Natural killer cell (primary cell): ENCODE measurements at regions of chr4 and their contacts with region 1.

Region 1: DNA sequence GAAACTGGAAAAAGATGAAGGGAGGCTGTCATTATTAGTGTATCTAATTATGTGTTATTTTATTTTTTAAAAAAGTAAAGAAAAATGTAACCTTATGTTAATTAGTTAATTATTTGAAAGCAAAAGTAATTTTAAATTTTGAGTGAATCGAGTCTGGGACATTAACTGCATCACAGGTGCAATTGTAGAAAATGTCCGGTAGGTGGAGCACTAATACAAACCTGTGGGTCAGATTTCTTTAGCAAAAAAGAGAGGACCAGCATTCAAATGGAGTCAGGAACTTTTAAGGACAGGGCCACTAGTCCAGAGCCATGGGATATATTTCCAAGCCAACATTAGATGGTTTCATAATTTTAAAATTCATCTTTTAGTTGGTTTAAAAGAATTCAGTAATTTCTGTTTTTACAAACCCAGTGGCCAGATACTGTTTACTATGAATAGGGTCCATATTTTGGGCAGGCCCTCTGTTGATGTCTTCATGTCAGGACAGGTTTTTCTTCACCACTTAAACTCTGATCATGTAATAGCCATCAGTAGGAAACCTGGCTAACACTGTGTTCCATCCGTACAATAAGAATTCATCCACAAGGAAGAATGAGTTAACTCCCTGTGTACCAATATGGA is 27.2 kb downstream of the BST1 start:
- DNase-seq: peak in 1 of 2 donors; percentile 74
- ATAC-seq: peak; percentile 76 to 83 (median 77)
- H3K4me3 ChIP-seq: no peak overlapping the region
- H3K4me3 Mint-ChIP-seq: no peak overlapping the region
- H3K27ac ChIP-seq: no peak overlapping the region
- H3K27ac Mint-ChIP-seq: no peak overlapping the region
- H3K4me1 ChIP-seq: no peaks in the 10 kb centered on the region
- H3K4me1 Mint-ChIP-seq: peaks cover 27 to 28% of the 10 kb centered on the region in 2 donors
- H3K27me3 ChIP-seq: no peaks in the 10 kb centered on the region
- H3K27me3 Mint-ChIP-seq: peaks cover 4 to 8% of the 10 kb centered on the region in 2 donors
- CTCF ChIP-seq: peak; percentile 98

Region 2: DNA sequence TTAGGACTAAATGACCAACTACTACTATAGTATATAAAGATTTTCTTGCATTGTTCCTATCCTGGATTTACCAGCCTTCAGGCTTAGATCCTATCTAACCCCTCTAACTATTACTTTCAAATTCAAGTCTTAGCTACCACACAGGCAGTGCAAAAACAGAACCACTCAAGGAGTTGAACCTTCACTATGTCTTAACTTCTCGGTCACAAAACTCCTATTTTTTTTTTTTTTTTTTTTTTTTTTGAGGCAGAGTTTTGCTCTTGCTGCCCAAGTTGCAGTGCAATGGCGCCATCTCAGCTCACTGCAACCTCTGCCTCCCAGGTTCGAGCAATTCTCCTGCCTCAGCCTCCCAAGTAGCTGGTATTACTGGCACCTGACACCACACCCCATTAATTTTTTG is 54.7 kb before region 1 on chr4:
- intact Hi-C with region 1: no loop called
- DNase-seq: no peak
- ATAC-seq: no peak
- H3K4me3 ChIP-seq: no peak overlapping the region
- H3K4me3 Mint-ChIP-seq: no peak overlapping the region
- H3K27ac ChIP-seq: no peak overlapping the region
- H3K27ac Mint-ChIP-seq: no peak overlapping the region
- H3K4me1 ChIP-seq: no peaks in the 10 kb centered on the region
- H3K4me1 Mint-ChIP-seq: no peaks in the 10 kb centered on the region
- H3K27me3 ChIP-seq: no peaks in the 10 kb centered on the region
- H3K27me3 Mint-ChIP-seq: no peaks in the 10 kb centered on the region
- CTCF ChIP-seq: no peak

Region 3: GRCh38 chr4:15756361-15756861 is 26.4 kb after region 1 on chr4:
- intact Hi-C with region 1: loop called (anchors 1 kb)
- DNase-seq: peak; percentile 68 to 91
- ATAC-seq: peak; percentile 85 to 95 (median 91)
- H3K4me3 ChIP-seq: peak overlapping the region; percentile 11
- H3K4me3 Mint-ChIP-seq: peak overlapping the region; percentile 90
- H3K27ac ChIP-seq: peak overlapping the region; percentile 40
- H3K27ac Mint-ChIP-seq: peak overlapping the region; percentile 79 to 88
- H3K4me1 ChIP-seq: peaks cover 36% of the 10 kb centered on the region
- H3K4me1 Mint-ChIP-seq: peaks cover 48 to 49% of the 10 kb centered on the region in 2 donors
- H3K27me3 ChIP-seq: no peaks in the 10 kb centered on the region
- H3K27me3 Mint-ChIP-seq: peaks cover 0 to 4% of the 10 kb centered on the region in 2 donors
- CTCF ChIP-seq: peak; percentile 65

Region 4: GRCh38 chr4:15778289-15779241 is 48.5 kb after region 1 on chr4 and contains the start of gene CD38:
- intact Hi-C with region 1: loop called (anchors 1 kb)
- DNase-seq: peak; percentile 61 to 68
- ATAC-seq: peak; percentile 55 to 71 (median 70)
- H3K4me3 ChIP-seq: peak within 1 kb of the TSS; percentile 59
- H3K4me3 Mint-ChIP-seq: peak within 1 kb of the TSS; percentile 91
- H3K27ac ChIP-seq: peak within 1 kb of the TSS; percentile 49
- H3K27ac Mint-ChIP-seq: peak within 1 kb of the TSS; percentile 83 to 86
- H3K4me1 ChIP-seq: peaks cover 46% of the 10 kb centered on the region
- H3K4me1 Mint-ChIP-seq: peaks cover 71 to 78% of the 10 kb centered on the region in 2 donors
- H3K27me3 ChIP-seq: no peaks in the 10 kb centered on the region
- H3K27me3 Mint-ChIP-seq: no peaks in the 10 kb centered on the region
- CTCF ChIP-seq: no peak
- total RNA-seq, gene CD38: 91.8 to 124 (median 98.8) TPM

Region 5: GRCh38 chr4:15805583-15806517 is 75.8 kb after region 1 on chr4:
- intact Hi-C with region 1: loop called (anchors 5 kb)
- DNase-seq: peak in 1 of 2 donors; percentile 78
- ATAC-seq: peak; percentile 74 to 83 (median 77)
- H3K4me3 ChIP-seq: no peak overlapping the region
- H3K4me3 Mint-ChIP-seq: no peak overlapping the region
- H3K27ac ChIP-seq: no peak overlapping the region
- H3K27ac Mint-ChIP-seq: peak overlapping the region; percentile 24 to 54
- H3K4me1 ChIP-seq: peaks cover 13% of the 10 kb centered on the region
- H3K4me1 Mint-ChIP-seq: peaks cover 49 to 52% of the 10 kb centered on the region in 2 donors
- H3K27me3 ChIP-seq: no peaks in the 10 kb centered on the region
- H3K27me3 Mint-ChIP-seq: no peaks in the 10 kb centered on the region
- CTCF ChIP-seq: peak; percentile 78

Region 6: DNA sequence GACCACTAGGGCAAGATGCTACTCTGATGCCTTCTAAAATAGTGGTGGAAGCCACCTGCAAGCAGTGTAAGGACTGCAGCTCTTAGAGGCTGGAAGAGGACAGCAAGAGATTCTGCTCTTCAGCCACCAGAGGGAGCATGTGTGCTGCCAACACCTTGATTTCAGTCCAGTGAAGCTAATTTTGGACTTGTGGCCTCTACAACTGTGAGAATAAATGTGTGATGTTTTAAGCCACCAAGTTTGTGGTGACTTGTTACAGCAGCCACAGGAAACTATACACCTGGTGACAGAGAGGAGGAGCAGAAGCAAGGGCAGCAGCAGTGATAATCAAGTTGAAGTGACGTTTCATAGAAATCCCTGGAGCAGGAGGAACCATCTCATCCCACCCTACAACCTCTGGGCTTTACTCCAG is 152.7 kb after region 1 on chr4:
- intact Hi-C with region 1: loop called (anchors 5 kb)
- DNase-seq: peak; percentile 41 to 81
- ATAC-seq: peak; percentile 92 to 97 (median 96)
- H3K4me3 ChIP-seq: no peak overlapping the region
- H3K4me3 Mint-ChIP-seq: peak overlapping the region; percentile 73
- H3K27ac ChIP-seq: no peak overlapping the region
- H3K27ac Mint-ChIP-seq: peak overlapping the region; percentile 54 to 68
- H3K4me1 ChIP-seq: peaks cover 16% of the 10 kb centered on the region
- H3K4me1 Mint-ChIP-seq: peaks cover 28% of the 10 kb centered on the region in 2 donors
- H3K27me3 ChIP-seq: no peaks in the 10 kb centered on the region
- H3K27me3 Mint-ChIP-seq: no peaks in the 10 kb centered on the region
- CTCF ChIP-seq: peak; percentile 88

Region 7: DNA sequence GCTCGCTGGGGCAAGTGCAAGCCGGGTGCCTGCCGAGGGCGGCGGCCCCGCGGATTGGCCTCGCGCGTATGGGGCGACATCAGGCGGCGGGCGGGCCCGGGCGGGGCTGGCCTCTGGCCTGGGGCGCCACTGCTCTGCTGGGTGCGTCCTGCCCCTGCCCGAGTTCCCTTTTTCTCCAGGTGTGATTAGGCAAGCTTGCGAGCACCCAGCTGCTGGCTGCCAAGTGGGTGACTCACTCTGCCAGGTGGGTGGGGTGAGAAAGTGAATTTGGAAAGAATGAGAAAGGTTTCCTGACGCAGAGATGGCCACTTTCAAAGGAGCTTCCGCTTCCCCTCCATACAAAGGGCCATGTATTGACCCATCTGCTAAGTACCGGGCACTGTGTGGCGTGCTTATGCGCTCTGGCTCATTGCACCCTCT is 176.0 kb after region 1 on chr4:
- intact Hi-C with region 1: no loop called
- DNase-seq: no peak
- ATAC-seq: peak in 1 of 3 donors; percentile 38
- H3K4me3 ChIP-seq: no peak overlapping the region
- H3K4me3 Mint-ChIP-seq: no peak overlapping the region
- H3K27ac ChIP-seq: no peak overlapping the region
- H3K27ac Mint-ChIP-seq: no peak overlapping the region
- H3K4me1 ChIP-seq: peaks cover 15% of the 10 kb centered on the region
- H3K4me1 Mint-ChIP-seq: peaks cover 18 to 38% of the 10 kb centered on the region in 2 donors
- H3K27me3 ChIP-seq: no peaks in the 10 kb centered on the region
- H3K27me3 Mint-ChIP-seq: peaks cover 0 to 12% of the 10 kb centered on the region in 2 donors
- CTCF ChIP-seq: no peak

Region 8: GRCh38 chr4:15956179-15956850 is 226.3 kb after region 1 on chr4:
- intact Hi-C with region 1: loop called (anchors 1 kb)
- DNase-seq: peak; percentile 75 to 86
- ATAC-seq: peak; percentile 82 to 91 (median 89)
- H3K4me3 ChIP-seq: no peak overlapping the region
- H3K4me3 Mint-ChIP-seq: peak overlapping the region; percentile 70
- H3K27ac ChIP-seq: no peak overlapping the region
- H3K27ac Mint-ChIP-seq: peak overlapping the region; percentile 81 to 83
- H3K4me1 ChIP-seq: peaks cover 16% of the 10 kb centered on the region
- H3K4me1 Mint-ChIP-seq: peaks cover 44 to 55% of the 10 kb centered on the region in 2 donors
- H3K27me3 ChIP-seq: no peaks in the 10 kb centered on the region
- H3K27me3 Mint-ChIP-seq: no peaks in the 10 kb centered on the region
- CTCF ChIP-seq: peak; percentile 86

Region 9: GRCh38 chr4:16001484-16001858 is 271.4 kb after region 1 on chr4:
- intact Hi-C with region 1: loop called (anchors 2 kb)
- DNase-seq: peak; percentile 47 to 79
- ATAC-seq: peak; percentile 83 to 89 (median 88)
- H3K4me3 ChIP-seq: no peak overlapping the region
- H3K4me3 Mint-ChIP-seq: no peak overlapping the region
- H3K27ac ChIP-seq: no peak overlapping the region
- H3K27ac Mint-ChIP-seq: no peak overlapping the region
- H3K4me1 ChIP-seq: peaks cover 9% of the 10 kb centered on the region
- H3K4me1 Mint-ChIP-seq: peaks cover 5 to 6% of the 10 kb centered on the region in 2 donors
- H3K27me3 ChIP-seq: no peaks in the 10 kb centered on the region
- H3K27me3 Mint-ChIP-seq: no peaks in the 10 kb centered on the region
- CTCF ChIP-seq: peak; percentile 78

Region 10: DNA sequence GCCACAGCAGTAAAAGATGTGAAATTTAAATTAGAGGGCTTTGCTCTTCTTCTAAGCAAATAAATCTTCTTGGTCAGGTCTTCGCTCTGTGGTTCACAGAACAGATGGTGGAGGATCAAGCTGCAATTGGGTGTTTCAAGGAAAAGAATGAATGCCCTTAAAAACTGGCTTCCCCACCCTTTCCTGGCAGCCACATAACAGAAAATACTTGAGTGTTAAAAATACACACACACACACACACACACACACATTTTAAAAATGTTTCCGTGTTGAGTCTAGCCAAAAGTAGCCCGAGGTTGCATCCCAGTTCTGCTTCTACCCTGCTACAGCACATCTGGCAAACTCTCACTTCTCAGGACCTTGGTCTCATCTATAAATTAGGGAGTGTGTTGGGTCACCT is 289.6 kb after region 1 on chr4:
- intact Hi-C with region 1: no loop called
- DNase-seq: no peak
- ATAC-seq: no peak
- H3K4me3 ChIP-seq: no peak overlapping the region
- H3K4me3 Mint-ChIP-seq: no peak overlapping the region
- H3K27ac ChIP-seq: no peak overlapping the region
- H3K27ac Mint-ChIP-seq: no peak overlapping the region
- H3K4me1 ChIP-seq: no peaks in the 10 kb centered on the region
- H3K4me1 Mint-ChIP-seq: no peaks in the 10 kb centered on the region
- H3K27me3 ChIP-seq: no peaks in the 10 kb centered on the region
- H3K27me3 Mint-ChIP-seq: peaks cover 0 to 12% of the 10 kb centered on the region in 2 donors
- CTCF ChIP-seq: no peak